Prostate gland (tissue), 2 donors: ENCODE measurements at regions of chr10 and their contacts with region 1.

Region 1: DNA sequence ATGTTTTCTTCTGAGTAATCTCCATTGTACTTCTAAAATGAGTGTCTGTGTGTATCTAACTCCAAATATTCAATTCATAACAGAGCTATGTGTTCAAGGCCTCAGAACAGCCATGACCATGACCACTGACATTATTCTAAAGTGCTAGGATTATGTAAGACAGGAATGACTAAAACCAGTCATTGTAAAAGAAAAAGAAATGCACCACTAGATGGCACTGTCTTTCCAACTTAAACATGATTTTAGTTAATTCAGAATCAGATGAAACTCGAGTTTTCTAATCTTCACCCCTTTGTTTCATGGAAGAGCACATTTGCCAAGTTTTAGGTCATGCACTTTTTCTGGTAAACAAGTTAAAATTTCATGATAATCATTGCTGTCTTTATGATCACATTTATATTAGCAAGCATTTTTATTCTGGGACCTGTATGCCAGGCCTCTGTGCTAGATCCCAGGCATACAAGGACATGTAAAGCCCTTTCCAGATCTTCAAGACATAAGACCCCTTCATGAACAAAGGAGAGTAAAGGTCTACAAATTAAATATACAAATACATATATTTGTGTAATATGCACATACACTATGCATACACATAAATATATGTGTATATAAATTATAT is 26.1 kb upstream of the RSU1 start:
- DNase-seq: peak; percentile 27
- H3K4me3 ChIP-seq: no peak overlapping the region
- H3K27ac ChIP-seq: no peak overlapping the region
- H3K4me1 ChIP-seq: no peaks in the 10 kb centered on the region
- H3K27me3 ChIP-seq: no peaks in the 10 kb centered on the region
- CTCF ChIP-seq: peak; percentile 49 to 83 (median 53)
- POLR2A ChIP-seq: no peak

Region 2: GRCh38 chr10:15411010-15411409 is 1432.4 kb before region 1 on chr10:
- intact Hi-C with region 1: no loop called
- DNase-seq: no peak
- H3K4me3 ChIP-seq: no peak overlapping the region
- H3K27ac ChIP-seq: no peak overlapping the region
- H3K4me1 ChIP-seq: no peaks in the 10 kb centered on the region
- H3K27me3 ChIP-seq: no peaks in the 10 kb centered on the region
- CTCF ChIP-seq: no peak
- POLR2A ChIP-seq: no peak

Region 3: GRCh38 chr10:16828114-16828568 is 15.2 kb before region 1 on chr10:
- intact Hi-C with region 1: no loop called
- DNase-seq: peak; percentile 53
- H3K4me3 ChIP-seq: no peak overlapping the region
- H3K27ac ChIP-seq: no peak overlapping the region
- H3K4me1 ChIP-seq: no peaks in the 10 kb centered on the region
- H3K27me3 ChIP-seq: no peaks in the 10 kb centered on the region
- CTCF ChIP-seq: peak in 3 of 4 experiments; percentile 57 to 66 (median 62)
- POLR2A ChIP-seq: no peak

Region 4: DNA sequence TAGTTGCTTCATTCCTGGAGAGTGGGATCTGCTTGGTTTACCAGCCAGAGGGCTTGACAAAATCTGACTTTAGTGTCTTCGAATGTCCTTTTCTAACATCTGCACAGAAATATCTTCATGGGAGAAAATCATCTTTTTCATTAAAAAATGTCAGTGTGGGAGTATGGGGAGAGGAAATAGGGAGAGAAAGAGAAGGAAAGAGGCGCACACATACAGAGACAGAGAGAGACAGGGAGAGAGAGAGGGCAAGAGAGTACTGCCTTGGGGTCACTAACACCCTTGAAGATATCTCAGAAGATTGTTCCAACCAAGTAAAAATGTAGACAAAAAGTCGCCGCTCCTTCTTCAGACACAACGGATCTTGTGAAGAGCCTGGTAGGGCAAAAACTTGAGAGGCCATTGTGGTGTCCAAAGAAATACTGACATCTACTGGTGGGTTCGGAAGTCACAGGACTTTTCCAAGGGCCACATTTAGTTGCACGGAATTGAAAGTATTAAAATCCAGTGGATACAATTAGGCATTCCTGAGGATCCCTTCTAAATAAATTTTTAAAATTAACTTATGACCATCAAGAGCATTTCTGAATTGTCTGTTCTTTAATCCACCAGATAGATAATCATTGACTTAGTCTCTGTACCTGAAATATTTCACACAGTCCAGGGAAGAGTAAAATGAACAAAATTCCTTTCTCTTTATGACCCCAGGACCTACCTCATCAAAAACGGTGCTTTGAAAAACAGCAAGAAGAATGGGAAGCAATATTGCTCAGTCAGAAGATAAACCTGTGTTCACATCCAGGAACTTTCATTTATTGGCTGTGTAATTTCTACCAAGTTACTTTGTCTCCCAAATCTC is 414.3 kb after region 1 on chr10:
- intact Hi-C with region 1: loop called (anchors 5 kb)
- DNase-seq: peak; percentile 62
- H3K4me3 ChIP-seq: no peak overlapping the region
- H3K27ac ChIP-seq: no peak overlapping the region
- H3K4me1 ChIP-seq: no peaks in the 10 kb centered on the region
- H3K27me3 ChIP-seq: no peaks in the 10 kb centered on the region
- CTCF ChIP-seq: peak; percentile 51 to 84 (median 78)
- POLR2A ChIP-seq: no peak

Region 5: GRCh38 chr10:17428351-17429097 is 585.2 kb after region 1 on chr10:
- intact Hi-C with region 1: loop called (anchors 5 kb)
- DNase-seq: no peak
- H3K4me3 ChIP-seq: no peak overlapping the region
- H3K27ac ChIP-seq: no peak overlapping the region
- H3K4me1 ChIP-seq: no peaks in the 10 kb centered on the region
- H3K27me3 ChIP-seq: no peaks in the 10 kb centered on the region
- CTCF ChIP-seq: no peak
- POLR2A ChIP-seq: no peak